Heart right ventricle (tissue), 16 donors: ENCODE measurements at regions of chr9 and their contacts with region 1.

Region 1: DNA sequence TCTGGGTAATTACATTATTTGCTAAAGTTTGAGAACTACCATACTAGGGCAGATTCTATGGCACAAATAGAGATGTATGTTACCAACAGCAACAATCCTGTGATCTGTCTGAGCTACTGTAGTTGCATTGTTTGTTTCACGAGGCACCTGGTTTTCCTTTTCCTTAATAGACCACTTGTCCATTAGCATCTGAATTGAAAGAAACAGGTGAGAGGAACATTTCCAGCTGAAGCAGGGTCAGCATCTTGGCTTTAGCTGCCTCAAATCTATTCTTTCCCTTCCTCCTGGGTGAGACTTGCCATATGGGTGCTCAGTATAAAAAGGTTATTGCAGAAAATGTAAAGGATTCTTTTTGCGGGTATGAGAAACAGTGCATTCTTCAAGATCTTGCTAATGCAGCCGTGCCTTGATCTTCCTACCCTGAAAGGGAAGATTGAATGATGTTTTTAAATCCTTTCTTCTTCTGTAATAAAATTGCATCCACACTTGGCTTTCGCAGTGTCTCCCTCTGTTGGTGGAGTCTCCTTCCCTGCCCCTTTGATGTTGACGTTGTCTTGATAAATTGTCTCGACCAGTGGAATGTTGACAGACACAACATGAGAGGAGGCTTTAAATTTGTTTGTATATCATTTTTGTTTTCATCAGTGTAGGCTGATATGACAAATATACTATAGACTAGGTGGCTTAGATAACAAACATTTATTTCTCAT is 118.0 kb upstream of the BRINP1 start:
- DNase-seq: no peak
- ATAC-seq: no peak
- H3K4me3 ChIP-seq: no peak overlapping the region
- H3K27ac ChIP-seq: no peak overlapping the region
- H3K4me1 ChIP-seq: no peaks in the 10 kb centered on the region
- H3K27me3 ChIP-seq: peaks cover 0 to 6% (median 0%) of the 10 kb centered on the region in 7 donors
- CTCF ChIP-seq: no peak

Region 2: GRCh38 chr9:118940473-118940872 is 546.8 kb before region 1 on chr9:
- intact Hi-C with region 1: no loop called
- DNase-seq: no peak
- ATAC-seq: no peak
- H3K4me3 ChIP-seq: no peak overlapping the region
- H3K27ac ChIP-seq: no peak overlapping the region
- H3K4me1 ChIP-seq: no peaks in the 10 kb centered on the region
- H3K27me3 ChIP-seq: no peaks in the 10 kb centered on the region
- CTCF ChIP-seq: no peak

Region 3: GRCh38 chr9:119252671-119253299 is 234.5 kb before region 1 on chr9:
- intact Hi-C with region 1: no loop called
- DNase-seq: no peak
- ATAC-seq: no peak
- H3K4me3 ChIP-seq: no peak overlapping the region
- H3K27ac ChIP-seq: no peak overlapping the region
- H3K4me1 ChIP-seq: no peaks in the 10 kb centered on the region
- H3K27me3 ChIP-seq: no peaks in the 10 kb centered on the region
- CTCF ChIP-seq: no peak

Region 4: DNA sequence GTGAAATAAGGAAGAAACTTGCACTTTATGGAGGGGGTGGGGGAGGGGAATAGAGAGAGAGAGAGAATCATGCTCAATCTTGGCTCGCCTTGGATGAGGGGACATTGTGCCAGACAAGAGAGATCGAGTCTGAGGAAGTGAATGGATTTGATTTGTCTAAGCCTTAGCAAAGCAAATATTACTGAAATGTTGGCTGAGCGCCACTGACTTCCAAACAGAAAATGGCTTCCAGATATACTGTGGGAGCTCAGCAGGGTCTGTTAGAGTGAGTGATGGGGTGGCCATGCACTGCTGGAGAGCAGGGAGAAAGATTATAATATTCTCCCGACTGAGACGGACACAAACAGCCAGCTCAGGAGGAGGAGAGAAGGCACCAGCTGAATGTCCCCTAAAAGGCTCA is 152.5 kb before region 1 on chr9:
- intact Hi-C with region 1: no loop called
- DNase-seq: no peak
- ATAC-seq: no peak
- H3K4me3 ChIP-seq: no peak overlapping the region
- H3K27ac ChIP-seq: no peak overlapping the region
- H3K4me1 ChIP-seq: peaks cover 0 to 11% (median 0%) of the 10 kb centered on the region in 9 donors
- H3K27me3 ChIP-seq: no peaks in the 10 kb centered on the region
- CTCF ChIP-seq: no peak

Region 5: DNA sequence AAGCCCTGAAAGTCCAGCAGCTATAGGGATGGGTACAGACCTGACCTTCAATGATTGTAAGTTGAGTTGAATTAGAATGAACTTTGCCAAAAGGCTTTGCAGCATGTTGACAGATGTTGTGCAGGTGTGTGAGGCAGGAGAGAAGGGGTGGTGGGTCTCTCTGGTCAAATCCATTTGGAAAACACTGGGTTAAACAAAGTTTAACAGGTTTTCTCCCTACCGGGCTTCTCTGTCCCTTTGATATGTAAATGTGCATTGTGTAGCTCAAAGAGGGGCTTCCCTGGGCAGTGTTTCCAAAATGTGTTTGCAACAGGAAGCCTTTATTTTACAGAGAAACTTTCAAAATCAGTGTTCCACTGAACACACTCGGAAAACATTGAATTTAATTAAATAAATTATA is 45.9 kb before region 1 on chr9:
- intact Hi-C with region 1: loop called in 1 of 10 experiments (anchors 5 kb)
- DNase-seq: no peak
- ATAC-seq: no peak
- H3K4me3 ChIP-seq: no peak overlapping the region
- H3K27ac ChIP-seq: no peak overlapping the region
- H3K4me1 ChIP-seq: no peaks in the 10 kb centered on the region
- H3K27me3 ChIP-seq: peaks cover 0 to 9% (median 0%) of the 10 kb centered on the region in 7 donors
- CTCF ChIP-seq: no peak